ENCODE measurements at regions of chr20 and their contacts with region 1.

Region 1: GRCh38 chr20:58839474-58839874 is 11.2 kb downstream of the GNAS-AS1 start:
- DNase-seq: peak in 1 of 2 donors; percentile 68
- ATAC-seq: peak; percentile 64 to 92 (median 76)
- H3K4me3 ChIP-seq: peak overlapping the region; percentile 52
- H3K27ac ChIP-seq: no peak overlapping the region
- H3K4me1 ChIP-seq: no peaks in the 10 kb centered on the region
- H3K27me3 ChIP-seq: peaks cover 0 to 34% (median 5%) of the 10 kb centered on the region in 3 donors
- CTCF ChIP-seq: peak; percentile 42

Region 2: DNA sequence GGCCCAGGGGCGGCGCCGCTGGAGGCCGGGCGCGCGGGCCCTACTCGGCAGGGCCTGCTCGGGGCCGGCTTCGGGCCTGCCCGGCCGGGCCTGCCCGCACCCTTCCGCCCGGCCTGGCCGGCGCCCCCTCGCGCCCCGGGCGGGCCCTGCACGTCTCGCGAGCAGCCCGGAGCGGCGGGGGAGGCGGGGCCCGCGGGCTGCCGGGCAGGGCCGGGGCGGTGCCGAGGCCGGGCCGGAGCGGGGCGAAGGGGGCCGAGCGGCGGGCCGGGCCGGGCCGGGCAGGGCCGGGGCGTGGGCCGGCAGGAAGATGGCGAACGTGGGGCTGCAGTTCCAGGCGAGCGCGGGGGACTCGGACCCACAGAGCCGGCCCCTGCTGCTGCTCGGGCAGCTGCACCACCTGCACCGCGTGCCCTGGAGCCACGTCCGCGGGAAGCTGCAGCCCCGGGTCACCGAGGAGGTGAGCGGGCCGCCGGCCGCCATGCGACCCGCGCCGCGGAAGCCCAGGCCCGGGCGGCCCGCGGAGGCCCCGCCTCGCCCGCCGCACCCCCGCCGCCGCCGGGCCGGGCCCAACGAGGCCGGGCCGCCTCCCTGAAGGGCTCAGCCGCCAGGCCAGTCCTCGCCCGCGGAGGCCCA is 146.8 kb before region 1 on chr20 and contains the start of gene NPEPL1:
- intact Hi-C with region 1: loop called in 1 of 2 experiments (anchors 5 kb)
- DNase-seq: peak; percentile 83 to 84
- ATAC-seq: peak; percentile 85 to 91 (median 86)
- H3K4me3 ChIP-seq: peak within 1 kb of the TSS; percentile 72
- H3K27ac ChIP-seq: peak within 1 kb of the TSS; percentile 91
- H3K4me1 ChIP-seq: peaks cover 32% of the 10 kb centered on the region
- H3K27me3 ChIP-seq: no peaks in the 10 kb centered on the region
- CTCF ChIP-seq: peak; percentile 31
- total RNA-seq, gene NPEPL1: 29.1 to 52.3 (median 36.4) TPM

Region 3: GRCh38 chr20:58765780-58766179 is 73.7 kb before region 1 on chr20:
- intact Hi-C with region 1: no loop called
- DNase-seq: no peak
- ATAC-seq: no peak
- H3K4me3 ChIP-seq: no peak overlapping the region
- H3K27ac ChIP-seq: no peak overlapping the region
- H3K4me1 ChIP-seq: no peaks in the 10 kb centered on the region
- H3K27me3 ChIP-seq: peaks cover 0 to 27% (median 0%) of the 10 kb centered on the region in 3 donors
- CTCF ChIP-seq: no peak

Measured in psoas muscle (tissue), 8 donors.